H1 (cell line): ENCODE measurements at regions of chr16 and their contacts with region 1.

Region 1: DNA sequence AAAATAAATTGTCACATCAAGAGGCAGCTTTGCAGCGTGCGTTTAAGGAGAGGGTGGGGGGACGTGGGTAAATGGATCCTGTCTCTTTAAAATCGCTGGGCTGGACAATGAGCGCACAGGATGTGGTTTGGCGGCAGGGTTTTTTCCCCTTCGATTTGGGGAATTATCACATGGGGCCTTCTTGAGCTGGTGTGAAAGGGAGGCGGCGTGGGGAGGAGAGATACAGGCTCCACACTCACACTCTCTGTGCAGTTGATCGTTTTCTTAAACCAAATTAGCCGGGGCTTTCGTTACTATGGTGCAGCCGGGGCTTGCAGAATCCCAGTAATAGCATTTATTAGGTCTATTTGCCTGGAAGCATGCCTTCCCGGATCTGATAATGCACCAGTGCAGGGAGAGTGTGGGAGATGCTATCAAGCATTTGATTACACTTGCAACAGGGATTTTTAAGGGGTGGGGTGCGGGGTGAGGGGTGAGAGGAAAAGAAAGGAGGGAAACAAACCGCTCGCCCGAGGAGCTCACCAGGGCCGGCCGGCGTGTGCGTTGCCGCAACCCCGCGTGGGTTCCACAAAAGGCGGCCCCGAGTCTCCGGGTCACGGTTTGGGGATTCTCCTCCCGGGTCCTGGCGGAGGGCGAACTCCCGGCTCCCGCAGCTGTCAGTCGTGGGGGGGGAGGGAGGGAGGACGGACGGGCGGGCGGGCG is 58.9 kb upstream of the GSE1 start:
- DNase-seq: no peak
- H3K4me3 ChIP-seq: peak overlapping the region; percentile 54 to 98 (median 61)
- H3K27ac ChIP-seq: no peak overlapping the region
- H3K4me1 ChIP-seq: peaks cover 0 to 27% (median 21%) of the 10 kb centered on the region in 4 experiments; a peak in 6 of 7 replicates
- H3K27me3 ChIP-seq: no peaks in the 10 kb centered on the region; a peak in 2 of 7 replicates
- CTCF ChIP-seq: no peak
- EP300 ChIP-seq: no peak
- POLR2A ChIP-seq: no peak
- RAD21 ChIP-seq: no peak

Region 2: DNA sequence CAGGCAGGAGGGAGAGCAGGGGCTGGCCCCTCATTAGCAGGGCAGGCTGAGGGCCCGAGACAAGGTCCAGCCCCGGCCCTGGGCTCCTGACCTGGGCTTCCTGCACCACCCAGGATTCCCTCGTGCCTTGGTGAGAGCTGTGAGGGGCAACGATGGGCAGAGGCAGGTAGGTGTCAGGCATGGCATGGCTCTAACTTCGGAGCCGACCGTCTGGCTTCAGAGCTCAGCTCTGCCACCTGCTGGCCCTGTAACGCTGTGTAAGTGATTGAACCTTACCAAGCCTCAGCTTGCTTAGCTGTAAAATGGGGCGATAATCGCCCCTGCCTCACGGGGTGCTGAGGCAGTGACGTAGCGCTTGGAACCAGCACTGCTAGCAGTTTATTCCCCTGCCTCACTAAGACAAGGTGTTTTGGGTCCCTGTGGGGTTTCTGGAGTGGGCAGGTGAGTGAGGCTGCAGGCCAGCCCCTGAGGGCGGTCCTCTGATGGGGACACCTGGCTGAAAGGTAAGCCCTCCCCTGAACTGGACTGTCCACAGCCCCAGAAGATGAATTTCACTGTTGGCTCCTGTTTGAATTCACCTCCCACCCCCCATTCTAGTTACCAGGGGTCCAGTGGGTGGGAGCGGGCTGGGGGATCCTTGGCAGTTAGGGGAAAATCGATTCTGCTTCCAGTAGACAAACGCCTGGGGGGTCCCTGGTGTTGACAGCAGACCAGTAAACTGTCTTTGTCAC is 125.9 kb before region 1 on chr16:
- CTCF ChIA-PET with region 1: interaction called, 57 read pairs
- POLR2A ChIA-PET with region 1: no interaction called
- DNase-seq: peak in 1 of 2 experiments; percentile 84
- H3K4me3 ChIP-seq: no peak overlapping the region
- H3K27ac ChIP-seq: no peak overlapping the region
- H3K4me1 ChIP-seq: peaks cover 0 to 4% (median 0%) of the 10 kb centered on the region in 4 experiments; a peak in 3 of 7 replicates
- H3K27me3 ChIP-seq: no peaks in the 10 kb centered on the region; a peak in 1 of 7 replicates
- CTCF ChIP-seq: peak; percentile 70 to 87 (median 86)
- EP300 ChIP-seq: no peak
- POLR2A ChIP-seq: no peak
- RAD21 ChIP-seq: peak; percentile 61 to 67

Region 3: GRCh38 chr16:85528528-85529387 is 25.5 kb before region 1 on chr16:
- CTCF ChIA-PET with region 1: interaction called, 76 read pairs
- POLR2A ChIA-PET with region 1: interaction called, 7 read pairs
- DNase-seq: no peak
- H3K4me3 ChIP-seq: no peak overlapping the region
- H3K27ac ChIP-seq: no peak overlapping the region
- H3K4me1 ChIP-seq: peaks cover 3 to 24% (median 13%) of the 10 kb centered on the region in 4 experiments
- H3K27me3 ChIP-seq: no peaks in the 10 kb centered on the region
- CTCF ChIP-seq: peak; percentile 37 to 57 (median 47)
- EP300 ChIP-seq: no peak
- POLR2A ChIP-seq: no peak
- RAD21 ChIP-seq: no peak; a peak in 1 of 4 replicates

Region 4: GRCh38 chr16:85564277-85565051 is 10.2 kb after region 1 on chr16:
- CTCF ChIA-PET with region 1: interaction called, 39 read pairs
- POLR2A ChIA-PET with region 1: interaction called, 9 read pairs
- DNase-seq: no peak
- H3K4me3 ChIP-seq: no peak overlapping the region
- H3K27ac ChIP-seq: no peak overlapping the region
- H3K4me1 ChIP-seq: peaks cover 14 to 52% (median 27%) of the 10 kb centered on the region in 4 experiments
- H3K27me3 ChIP-seq: no peaks in the 10 kb centered on the region
- CTCF ChIP-seq: peak; percentile 53 to 70 (median 68)
- EP300 ChIP-seq: no peak
- POLR2A ChIP-seq: no peak
- RAD21 ChIP-seq: peak in 1 of 2 experiments; percentile 18; a peak in 1 of 4 replicates

Region 5: GRCh38 chr16:85574672-85575475 is 20.6 kb after region 1 on chr16:
- CTCF ChIA-PET with region 1: interaction called, 30 read pairs
- POLR2A ChIA-PET with region 1: interaction called, 3 read pairs
- DNase-seq: no peak
- H3K4me3 ChIP-seq: no peak overlapping the region
- H3K27ac ChIP-seq: no peak overlapping the region
- H3K4me1 ChIP-seq: peaks cover 12 to 69% (median 46%) of the 10 kb centered on the region in 4 experiments
- H3K27me3 ChIP-seq: peaks cover 0 to 7% (median 2%) of the 10 kb centered on the region in 4 experiments; a peak in 2 of 7 replicates
- CTCF ChIP-seq: no peak
- EP300 ChIP-seq: no peak
- POLR2A ChIP-seq: no peak
- RAD21 ChIP-seq: no peak

Region 6: DNA sequence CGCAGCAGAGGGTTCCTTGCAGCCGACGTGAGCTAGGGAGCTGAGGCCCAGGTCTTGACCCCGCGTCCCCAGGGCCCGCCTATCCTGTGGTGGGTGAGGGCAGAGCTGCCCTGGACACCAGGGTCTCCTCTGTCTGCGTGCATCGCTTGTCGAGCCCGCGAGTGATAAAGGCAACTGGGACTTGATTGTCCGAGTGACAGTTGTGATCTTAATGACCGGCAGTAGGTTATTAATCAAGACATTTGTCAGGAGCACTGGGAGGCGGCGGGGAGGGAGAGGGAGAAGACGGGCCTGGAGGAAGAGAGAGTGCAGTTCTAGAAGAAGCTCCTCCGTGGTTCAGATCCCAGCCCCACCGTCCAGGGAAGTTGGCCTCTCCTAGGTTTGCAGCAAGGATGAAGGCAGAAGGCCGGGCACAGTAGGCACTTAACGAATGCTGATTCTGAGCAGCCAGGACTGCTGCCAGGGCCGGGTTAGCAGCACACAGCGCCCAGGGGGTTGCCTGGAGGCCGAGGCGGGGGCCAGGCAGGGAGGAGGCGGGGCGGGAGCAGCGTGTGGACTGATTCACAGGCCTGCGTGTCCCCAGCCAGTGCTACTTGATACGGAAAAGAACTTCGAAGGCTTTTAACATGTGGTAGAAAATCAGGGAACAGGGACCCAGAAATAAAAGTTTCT is 47.6 kb after region 1 on chr16:
- CTCF ChIA-PET with region 1: interaction called, 68 read pairs
- POLR2A ChIA-PET with region 1: interaction called, 11 read pairs
- DNase-seq: peak in 1 of 2 experiments; percentile 66
- H3K4me3 ChIP-seq: no peak overlapping the region
- H3K27ac ChIP-seq: no peak overlapping the region
- H3K4me1 ChIP-seq: peaks cover 10 to 58% (median 46%) of the 10 kb centered on the region in 4 experiments
- H3K27me3 ChIP-seq: no peaks in the 10 kb centered on the region
- CTCF ChIP-seq: no peak
- EP300 ChIP-seq: no peak
- POLR2A ChIP-seq: no peak
- RAD21 ChIP-seq: no peak